Breast epithelium (tissue), 4 donors: ENCODE measurements at regions of chr6 and their contacts with region 1.

Region 1: DNA sequence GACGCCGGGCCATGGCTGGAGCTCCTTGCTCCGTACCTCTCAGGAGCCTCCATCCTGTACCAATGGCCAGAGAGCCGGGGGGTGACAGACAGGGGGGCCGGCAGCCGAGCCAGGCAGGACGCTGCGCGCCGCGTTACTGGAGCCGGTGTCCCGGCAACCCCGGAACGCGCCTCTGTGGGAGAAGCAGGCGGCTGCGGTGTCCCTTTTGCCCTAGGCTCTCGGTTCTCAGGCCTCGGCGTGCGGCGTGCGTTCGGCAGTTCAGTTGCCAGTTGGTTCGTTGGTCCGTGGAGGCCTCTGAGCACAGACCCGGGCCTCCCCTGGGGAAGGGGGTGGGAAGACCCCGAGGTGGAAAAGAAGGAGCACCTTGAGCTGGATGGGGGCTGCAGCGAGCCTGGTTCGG is at the start of gene SPATS1:
- DNase-seq: no peak
- H3K4me3 ChIP-seq: peak within 1 kb of the TSS; percentile 20 to 55 (median 34)
- H3K27ac ChIP-seq: no peak within 1 kb of the TSS
- H3K4me1 ChIP-seq: no peaks in the 10 kb centered on the region
- H3K27me3 ChIP-seq: peaks cover 0 to 14% of the 10 kb centered on the region in 2 donors
- CTCF ChIP-seq: no peak
- POLR2A ChIP-seq: no peak
- total RNA-seq, gene SPATS1: not detected

Region 2: GRCh38 chr6:43593938-43594337 is 748.6 kb before region 1 on chr6:
- intact Hi-C with region 1: loop called (anchors 10 kb)
- DNase-seq: no peak
- H3K4me3 ChIP-seq: no peak overlapping the region
- H3K27ac ChIP-seq: no peak overlapping the region
- H3K4me1 ChIP-seq: no peaks in the 10 kb centered on the region
- H3K27me3 ChIP-seq: no peaks in the 10 kb centered on the region
- CTCF ChIP-seq: no peak
- POLR2A ChIP-seq: no peak

Region 3: DNA sequence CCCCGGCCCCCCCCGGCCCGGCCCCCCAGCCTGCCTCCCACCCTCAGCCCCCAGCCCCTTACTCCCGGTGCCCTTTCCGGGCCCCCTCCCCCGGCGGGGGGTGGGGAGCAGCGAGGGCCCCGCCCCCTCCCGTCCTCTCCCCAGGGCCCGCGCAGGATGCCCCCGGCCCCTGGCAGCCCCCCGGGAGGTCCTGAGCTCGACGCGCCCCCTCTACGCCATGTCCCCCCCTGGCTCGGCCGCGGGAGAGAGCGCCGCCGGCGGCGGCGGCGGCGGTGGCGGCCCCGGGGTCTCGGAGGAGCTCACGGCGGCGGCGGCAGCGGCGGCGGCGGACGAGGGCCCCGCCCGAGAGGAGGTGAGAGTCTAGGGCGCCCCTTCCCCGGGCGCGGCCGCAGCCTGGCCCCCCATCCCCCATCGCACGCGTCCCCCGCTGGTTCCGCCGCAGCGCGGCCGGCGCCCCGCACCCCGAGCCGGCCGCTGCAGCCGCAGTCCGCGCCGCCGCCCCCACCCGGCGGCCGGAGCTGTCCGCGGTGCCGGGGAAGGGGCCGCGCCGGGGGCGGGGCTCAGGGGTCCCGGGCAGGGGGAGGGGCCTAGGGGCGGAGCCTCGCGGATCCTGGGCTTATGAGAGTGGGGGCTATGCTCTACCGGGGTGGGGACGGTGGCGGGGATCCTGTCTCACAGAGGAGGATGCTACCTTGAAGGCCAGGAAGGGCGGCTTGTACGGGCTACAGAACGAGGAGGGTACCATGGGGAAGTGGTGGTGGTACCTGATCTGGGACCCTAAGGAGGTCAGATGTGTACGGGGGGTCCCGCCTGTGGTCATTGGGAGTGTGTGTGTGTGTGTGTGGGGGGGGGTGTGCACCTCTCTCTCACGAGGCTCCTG is 71.7 kb before region 1 on chr6:
- intact Hi-C with region 1: loop called (anchors 2 kb)
- DNase-seq: no peak
- H3K4me3 ChIP-seq: peak overlapping the region; percentile 11 to 79 (median 52)
- H3K27ac ChIP-seq: no peak overlapping the region
- H3K4me1 ChIP-seq: no peaks in the 10 kb centered on the region
- H3K27me3 ChIP-seq: peaks cover 6 to 26% of the 10 kb centered on the region in 2 donors
- CTCF ChIP-seq: no peak
- POLR2A ChIP-seq: no peak